ENCODE measurements at regions of chr9 and their contacts with region 1.

Region 1: GRCh38 chr9:37984672-37985611 is 81.0 kb upstream of the SLC25A51 start:
- DNase-seq: peak; percentile 56 to 73 (median 66)
- ATAC-seq: peak; percentile 83 to 88 (median 86)
- H3K4me3 ChIP-seq: no peak overlapping the region
- H3K27ac ChIP-seq: peak overlapping the region in 10 of 12 donors; percentile 8 to 81 (median 18)
- H3K4me1 ChIP-seq: peaks cover 3 to 67% (median 42%) of the 10 kb centered on the region in 12 donors
- H3K27me3 ChIP-seq: no peaks in the 10 kb centered on the region
- CTCF ChIP-seq: peak in 4 of 12 donors; percentile 14 to 32 (median 18)
- POLR2A ChIP-seq: no peak

Region 2: DNA sequence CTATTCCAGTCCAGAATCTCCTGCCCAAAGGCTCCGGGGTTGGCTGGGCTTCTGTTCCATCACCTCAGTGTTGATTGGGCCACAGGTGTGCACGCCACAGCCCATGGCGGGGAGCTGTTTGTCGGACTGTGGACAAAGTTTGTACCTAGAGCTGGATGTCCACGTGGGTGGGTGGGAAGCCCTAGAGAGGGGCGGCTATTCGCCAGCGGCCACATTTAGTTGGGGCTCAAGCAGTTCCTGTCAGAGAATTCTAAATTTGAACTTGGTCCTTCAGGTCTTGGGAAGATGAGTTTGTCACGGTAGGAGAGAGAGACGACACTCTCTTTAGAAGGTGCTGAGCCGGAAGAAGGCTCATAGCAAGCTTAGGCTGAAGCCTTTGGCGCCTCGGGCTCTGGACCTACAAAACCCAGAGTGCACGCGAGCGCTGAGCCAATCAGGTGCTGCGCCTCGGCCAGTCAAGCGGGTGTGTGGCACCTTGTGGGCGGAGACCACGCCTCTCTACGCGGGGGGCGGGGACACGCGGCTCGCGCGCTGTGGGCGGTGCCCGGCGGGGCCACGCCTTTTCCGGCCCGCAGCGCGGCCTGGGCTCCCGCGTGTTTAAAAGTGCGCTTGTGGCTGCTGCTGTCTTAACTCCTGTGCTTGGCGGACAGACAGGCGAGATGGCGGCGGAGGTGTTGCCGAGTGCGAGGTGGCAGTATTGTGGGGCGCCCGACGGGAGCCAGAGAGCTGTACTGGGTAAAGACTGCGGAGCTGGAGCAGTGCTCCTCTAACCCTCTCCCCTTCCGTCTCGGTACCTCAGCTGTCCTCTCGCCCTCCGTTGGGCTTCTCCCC is 499.3 kb before region 1 on chr9 and contains the start of gene POLR1E:
- intact Hi-C with region 1: no loop called
- DNase-seq: peak; percentile 92 to 97 (median 96)
- ATAC-seq: peak; percentile 94 to 98 (median 98)
- H3K4me3 ChIP-seq: peak within 1 kb of the TSS; percentile 36 to 84 (median 70)
- H3K27ac ChIP-seq: peak within 1 kb of the TSS in 11 of 12 donors; percentile 6 to 87 (median 78)
- H3K4me1 ChIP-seq: peaks cover 5 to 30% (median 26%) of the 10 kb centered on the region in 12 donors
- H3K27me3 ChIP-seq: peaks cover 0 to 10% (median 0%) of the 10 kb centered on the region in 9 donors
- CTCF ChIP-seq: no peak
- POLR2A ChIP-seq: peak in 1 of 2 donors; percentile 76
- total RNA-seq, gene POLR1E: 11.2 to 24.8 (median 12.8) TPM

Region 3: GRCh38 chr9:37859043-37859442 is 125.9 kb before region 1 on chr9:
- intact Hi-C with region 1: no loop called
- DNase-seq: no peak
- ATAC-seq: no peak
- H3K4me3 ChIP-seq: no peak overlapping the region
- H3K27ac ChIP-seq: no peak overlapping the region
- H3K4me1 ChIP-seq: no peaks in the 10 kb centered on the region
- H3K27me3 ChIP-seq: no peaks in the 10 kb centered on the region
- CTCF ChIP-seq: peak in 1 of 12 donors; percentile 7
- POLR2A ChIP-seq: no peak

Region 4: DNA sequence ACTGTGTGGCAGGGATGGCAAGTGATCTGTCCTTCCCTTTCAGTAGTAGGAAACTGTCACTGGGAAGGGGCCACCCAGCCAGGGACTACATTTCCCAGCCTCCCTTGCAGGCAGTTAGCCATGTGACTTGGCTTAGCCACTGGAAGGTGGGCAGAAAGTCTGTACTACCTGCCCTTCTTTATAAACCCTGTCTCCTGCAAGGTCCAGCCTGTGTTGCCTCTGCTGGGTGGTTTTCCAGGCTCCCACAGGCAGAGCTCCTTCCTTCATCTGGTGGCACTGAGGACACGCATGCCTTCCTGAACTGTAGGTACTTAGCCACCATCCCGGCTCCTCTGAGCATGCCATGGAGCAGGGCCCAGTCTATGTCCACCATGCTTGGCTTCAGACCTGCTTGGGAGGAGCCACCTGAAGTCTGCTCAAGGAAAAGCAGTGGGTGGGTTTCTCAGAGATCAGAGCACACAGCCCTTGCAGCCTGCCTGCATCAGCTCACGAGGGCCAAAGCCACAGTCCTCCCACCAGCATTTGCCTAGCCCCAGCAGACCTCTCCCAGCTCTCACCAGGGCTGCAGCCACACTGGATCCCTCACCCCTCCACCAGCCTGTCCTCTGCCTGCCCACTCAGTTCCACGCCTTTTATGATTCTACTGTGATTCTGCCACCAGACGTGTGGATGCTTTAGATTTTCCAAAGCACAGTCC is 64.3 kb before region 1 on chr9:
- intact Hi-C with region 1: loop called in 5 of 10 experiments (anchors 1 to 10 kb)
- DNase-seq: no peak
- ATAC-seq: no peak
- H3K4me3 ChIP-seq: no peak overlapping the region
- H3K27ac ChIP-seq: no peak overlapping the region
- H3K4me1 ChIP-seq: peaks cover 0 to 52% (median 26%) of the 10 kb centered on the region in 12 donors
- H3K27me3 ChIP-seq: no peaks in the 10 kb centered on the region
- CTCF ChIP-seq: no peak
- POLR2A ChIP-seq: no peak

Region 5: DNA sequence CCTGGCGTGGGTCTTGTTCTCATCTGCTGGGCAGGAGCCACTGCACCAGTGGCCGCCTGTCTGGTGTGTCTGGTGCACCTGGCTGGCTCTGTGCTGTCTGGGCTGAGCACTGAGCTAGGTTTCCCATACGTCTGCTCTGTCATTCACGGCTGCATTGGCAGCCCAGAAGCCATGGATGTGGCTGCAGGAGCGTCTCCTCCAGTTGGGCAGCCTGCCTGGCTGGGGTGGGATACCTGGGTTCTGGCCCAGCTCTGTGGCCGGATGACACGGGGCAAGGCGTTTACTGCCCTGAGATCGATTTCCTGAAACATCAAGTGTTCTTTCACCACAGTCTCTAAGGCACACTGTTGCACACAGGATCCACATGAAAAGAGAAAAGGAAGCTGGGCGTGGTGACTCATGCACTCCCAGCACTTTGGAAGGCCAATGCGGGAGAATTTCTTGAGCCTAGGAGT is 55.5 kb before region 1 on chr9:
- intact Hi-C with region 1: loop called in 3 of 10 experiments (anchors 5 to 10 kb)
- DNase-seq: peak in 1 of 5 donors; percentile 43
- ATAC-seq: peak in 3 of 4 donors; percentile 11 to 47 (median 14)
- H3K4me3 ChIP-seq: no peak overlapping the region
- H3K27ac ChIP-seq: peak overlapping the region in 2 of 12 donors; percentile 2 to 13
- H3K4me1 ChIP-seq: peaks cover 2 to 42% (median 20%) of the 10 kb centered on the region in 12 donors
- H3K27me3 ChIP-seq: no peaks in the 10 kb centered on the region
- CTCF ChIP-seq: no peak
- POLR2A ChIP-seq: no peak

Region 6: GRCh38 chr9:37938121-37938891 is 46.6 kb before region 1 on chr9:
- intact Hi-C with region 1: loop called in 2 of 10 experiments (anchors 5 kb)
- DNase-seq: peak; percentile 38 to 74 (median 64)
- ATAC-seq: peak; percentile 30 to 70 (median 61)
- H3K4me3 ChIP-seq: no peak overlapping the region
- H3K27ac ChIP-seq: peak overlapping the region; percentile 2 to 74 (median 60)
- H3K4me1 ChIP-seq: peaks cover 9 to 55% (median 44%) of the 10 kb centered on the region in 12 donors
- H3K27me3 ChIP-seq: no peaks in the 10 kb centered on the region
- CTCF ChIP-seq: no peak
- POLR2A ChIP-seq: no peak

Region 7: GRCh38 chr9:37943329-37944265 is 41.3 kb before region 1 on chr9:
- intact Hi-C with region 1: loop called in 3 of 10 experiments (anchors 5 kb)
- DNase-seq: peak in 3 of 5 donors; percentile 60 to 67 (median 63)
- ATAC-seq: peak; percentile 28 to 48 (median 42)
- H3K4me3 ChIP-seq: no peak overlapping the region
- H3K27ac ChIP-seq: peak overlapping the region in 5 of 12 donors; percentile 5 to 45 (median 30)
- H3K4me1 ChIP-seq: peaks cover 6 to 75% (median 45%) of the 10 kb centered on the region in 12 donors
- H3K27me3 ChIP-seq: no peaks in the 10 kb centered on the region
- CTCF ChIP-seq: no peak
- POLR2A ChIP-seq: no peak

Region 8: DNA sequence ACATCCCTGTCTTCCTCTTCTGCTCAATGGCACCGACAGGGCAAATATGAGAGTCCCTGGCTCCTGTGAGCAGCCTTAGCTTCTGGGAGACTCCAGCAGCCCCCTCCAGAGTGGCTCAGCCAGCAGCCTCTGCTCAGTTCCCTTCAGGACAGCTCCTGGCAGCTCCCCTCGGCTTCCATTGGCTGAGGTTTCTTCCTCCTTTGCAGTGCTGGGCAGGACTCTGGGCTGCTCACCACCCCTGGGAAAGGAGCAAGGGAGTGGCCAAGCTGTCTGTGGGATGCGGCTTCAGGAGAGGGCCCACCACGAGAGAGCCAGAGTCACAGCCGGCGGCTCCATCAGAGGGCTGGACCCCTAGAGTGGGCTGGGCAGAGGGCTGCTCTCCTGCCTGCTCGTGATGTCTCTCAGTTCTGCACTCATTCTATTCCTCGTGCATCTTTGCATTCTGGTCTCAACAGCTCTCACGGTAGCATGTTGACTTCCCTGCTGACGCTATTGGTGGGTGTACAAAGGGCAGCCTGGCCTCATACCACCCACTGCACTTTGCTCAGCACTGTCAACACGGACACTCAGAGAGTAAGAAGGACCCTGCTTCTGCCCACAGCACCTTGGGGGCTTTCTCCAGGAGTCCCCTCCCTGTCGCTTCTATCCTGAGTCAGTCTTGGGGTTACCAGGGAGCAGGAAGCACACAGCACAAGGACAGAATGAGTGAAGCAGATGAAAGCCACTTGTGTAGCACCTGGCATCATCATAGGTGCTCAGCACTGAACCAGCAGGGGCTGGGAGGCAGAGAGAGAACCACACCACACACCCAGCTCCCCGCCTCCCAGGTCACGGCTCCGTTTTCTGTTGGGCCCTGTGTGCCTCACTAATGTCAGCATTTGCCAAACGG is 326.7 kb after region 1 on chr9:
- intact Hi-C with region 1: no loop called
- DNase-seq: no peak
- ATAC-seq: peak; percentile 48 to 72 (median 67)
- H3K4me3 ChIP-seq: peak overlapping the region in 8 of 12 donors; percentile 10 to 52 (median 30)
- H3K27ac ChIP-seq: peak overlapping the region in 6 of 12 donors; percentile 11 to 76 (median 48)
- H3K4me1 ChIP-seq: peaks cover 0 to 25% (median 9%) of the 10 kb centered on the region in 12 donors
- H3K27me3 ChIP-seq: peaks cover 0 to 9% (median 0%) of the 10 kb centered on the region in 9 donors
- CTCF ChIP-seq: no peak
- POLR2A ChIP-seq: no peak